Caco-2 (cell line): ENCODE measurements at regions of chr10 and their contacts with region 1.

Region 1: DNA sequence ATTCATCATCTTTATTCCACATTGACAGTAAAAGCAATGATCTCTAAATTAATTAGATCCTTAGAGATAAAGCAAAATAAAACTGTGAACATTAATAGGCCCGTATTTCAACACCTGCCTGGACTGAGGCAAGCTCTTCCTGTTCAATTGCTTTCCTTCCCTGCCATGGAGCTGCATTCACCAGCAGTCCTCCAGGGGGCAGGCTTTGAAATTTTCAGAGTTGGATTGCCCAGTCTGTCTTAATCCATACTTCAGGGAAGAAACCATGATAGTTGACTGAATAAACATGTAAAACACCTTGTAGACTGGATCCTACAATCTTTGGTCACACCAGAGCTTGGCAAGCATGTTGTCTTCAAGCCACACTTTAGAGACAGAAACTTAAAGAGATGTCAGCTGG is 936.6 kb downstream of the NRG3 start:
- DNase-seq: peak in 1 of 2 experiments; percentile 42
- H3K4me3 ChIP-seq: no peak overlapping the region
- H3K4me3 Mint-ChIP-seq: no peak overlapping the region
- H3K27ac Mint-ChIP-seq: no peak overlapping the region
- H3K4me1 ChIP-seq: peaks cover 10% of the 10 kb centered on the region; the same call in 1 of the 2 replicates
- H3K4me1 Mint-ChIP-seq: peaks cover 16% of the 10 kb centered on the region
- H3K27me3 ChIP-seq: no peaks in the 10 kb centered on the region
- H3K27me3 Mint-ChIP-seq: no peaks in the 10 kb centered on the region
- CTCF ChIP-seq: peak; percentile 36 to 51

Region 2: DNA sequence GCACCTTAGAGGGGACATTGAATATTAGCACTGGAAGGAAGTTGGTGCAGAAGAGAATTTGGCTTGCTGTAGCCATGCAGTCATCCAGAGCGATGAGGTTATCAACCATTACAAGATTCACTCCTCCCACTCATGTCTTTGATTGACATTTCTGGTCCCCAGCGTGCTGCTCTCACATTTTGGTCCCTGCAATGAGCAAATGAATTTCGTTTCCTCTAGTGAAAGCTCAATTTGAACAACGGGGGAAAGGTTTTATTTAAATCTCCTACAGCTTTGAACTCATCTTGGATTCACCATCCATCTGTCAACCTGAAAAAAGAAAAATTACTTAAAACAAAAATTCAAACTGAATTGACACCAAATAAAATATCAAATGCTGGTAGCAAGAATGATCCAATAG is 38.6 kb after region 1 on chr10:
- CTCF ChIA-PET with region 1: no interaction called
- POLR2A ChIA-PET with region 1: no interaction called
- intact Hi-C with region 1: no loop called
- DNase-seq: no peak
- H3K4me3 ChIP-seq: no peak overlapping the region
- H3K4me3 Mint-ChIP-seq: no peak overlapping the region
- H3K27ac Mint-ChIP-seq: no peak overlapping the region
- H3K4me1 ChIP-seq: no peaks in the 10 kb centered on the region
- H3K4me1 Mint-ChIP-seq: no peaks in the 10 kb centered on the region
- H3K27me3 ChIP-seq: no peaks in the 10 kb centered on the region
- H3K27me3 Mint-ChIP-seq: peaks cover 3% of the 10 kb centered on the region
- CTCF ChIP-seq: no peak

Region 3: GRCh38 chr10:82928539-82928938 is 116.9 kb after region 1 on chr10:
- CTCF ChIA-PET with region 1: no interaction called
- POLR2A ChIA-PET with region 1: no interaction called
- intact Hi-C with region 1: loop called (anchors 1 kb)
- DNase-seq: peak; percentile 38 to 41
- H3K4me3 ChIP-seq: no peak overlapping the region
- H3K4me3 Mint-ChIP-seq: no peak overlapping the region
- H3K27ac Mint-ChIP-seq: no peak overlapping the region
- H3K4me1 ChIP-seq: peaks cover 6% of the 10 kb centered on the region; the same call in 1 of the 2 replicates
- H3K4me1 Mint-ChIP-seq: peaks cover 11% of the 10 kb centered on the region
- H3K27me3 ChIP-seq: no peaks in the 10 kb centered on the region
- H3K27me3 Mint-ChIP-seq: no peaks in the 10 kb centered on the region
- CTCF ChIP-seq: no peak